ENCODE measurements at regions of chr21 and their contacts with region 1.

Region 1: DNA sequence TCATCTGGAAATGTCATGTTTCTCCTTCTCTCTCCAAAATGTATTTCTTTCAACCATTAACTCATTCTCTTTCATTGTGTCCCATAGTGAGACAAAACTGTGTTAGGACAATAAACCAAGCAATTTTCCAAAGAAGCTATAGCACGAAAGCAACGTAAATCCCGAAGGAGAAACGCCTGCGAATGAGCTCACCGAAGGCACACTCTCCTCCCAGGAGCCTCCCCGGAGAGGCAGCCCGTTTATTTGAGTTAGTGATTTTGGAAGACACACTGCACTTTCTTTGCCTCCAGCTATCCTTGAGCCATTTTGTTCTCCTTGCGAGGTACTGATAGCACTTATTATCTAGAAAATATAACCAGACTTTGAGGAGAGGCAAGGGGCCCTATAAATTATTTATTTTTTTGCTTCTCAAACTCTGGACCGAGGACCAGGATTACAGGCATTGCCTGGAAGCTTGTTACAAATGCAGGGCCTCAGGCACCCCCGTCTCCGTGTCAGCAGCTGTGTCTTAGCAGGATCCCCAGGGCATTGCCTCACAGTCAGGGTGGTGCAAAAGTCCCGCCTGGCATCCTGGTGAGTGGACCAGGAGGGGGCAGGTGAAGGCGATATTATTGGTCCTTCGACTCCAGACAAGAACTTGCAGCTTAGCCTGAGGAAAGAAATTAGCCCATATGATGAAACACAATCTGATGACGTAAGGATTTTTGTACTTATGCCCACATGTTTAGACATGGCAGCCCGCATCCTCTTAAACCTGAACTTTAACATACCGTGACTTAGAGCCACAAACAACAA is 41.0 kb downstream of the RSPH1 start:
- DNase-seq: no peak
- ATAC-seq: no peak
- H3K4me3 ChIP-seq: no peak overlapping the region
- H3K4me3 Mint-ChIP-seq: peak overlapping the region in 1 of 10 donors; percentile 17
- H3K27ac ChIP-seq: no peak overlapping the region
- H3K27ac Mint-ChIP-seq: peak overlapping the region in 2 of 9 donors; percentile 32 to 45
- H3K4me1 ChIP-seq: peaks cover 0 to 17% of the 10 kb centered on the region in 2 donors
- H3K4me1 Mint-ChIP-seq: peaks cover 19 to 61% (median 48%) of the 10 kb centered on the region in 7 donors
- H3K27me3 ChIP-seq: no peaks in the 10 kb centered on the region
- H3K27me3 Mint-ChIP-seq: no peaks in the 10 kb centered on the region

Region 2: DNA sequence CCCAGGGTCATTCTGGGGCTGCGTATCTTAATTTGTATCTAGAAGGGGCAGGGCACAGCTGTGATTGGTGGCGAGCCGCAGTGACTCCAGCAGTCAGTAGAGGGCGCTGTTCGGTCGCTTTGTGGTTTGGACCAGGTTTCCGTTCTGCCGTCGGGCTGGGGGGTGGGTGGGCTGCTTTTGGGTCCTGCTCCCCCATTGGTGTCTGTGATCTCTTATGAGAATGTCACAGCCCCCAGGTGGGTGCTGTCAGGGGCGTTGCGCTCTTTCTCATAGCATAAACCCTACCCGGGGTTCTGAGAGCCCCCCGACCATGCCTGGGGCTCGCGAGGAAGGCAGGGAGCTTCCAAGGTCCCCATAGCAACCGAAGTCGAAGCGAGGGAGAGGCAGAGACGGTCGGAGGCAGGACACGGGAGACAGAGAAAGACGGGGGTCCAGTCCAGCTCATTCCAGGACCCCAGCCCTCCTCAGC is 145.2 kb before region 1 on chr21:
- CTCF ChIA-PET with region 1: interaction called, 5 read pairs
- POLR2A ChIA-PET with region 1: no interaction called
- intact Hi-C with region 1: loop called (anchors 1 kb)
- DNase-seq: peak; percentile 48 to 80 (median 61)
- ATAC-seq: peak; percentile 86
- H3K4me3 ChIP-seq: no peak overlapping the region
- H3K4me3 Mint-ChIP-seq: peak overlapping the region in 6 of 10 donors; percentile 7 to 46 (median 38)
- H3K27ac ChIP-seq: no peak overlapping the region
- H3K27ac Mint-ChIP-seq: peak overlapping the region in 6 of 9 donors; percentile 21 to 49 (median 36)
- H3K4me1 ChIP-seq: peaks cover 0 to 8% of the 10 kb centered on the region in 2 donors
- H3K4me1 Mint-ChIP-seq: peaks cover 0 to 16% (median 7%) of the 10 kb centered on the region in 7 donors
- H3K27me3 ChIP-seq: no peaks in the 10 kb centered on the region
- H3K27me3 Mint-ChIP-seq: peaks cover 0 to 15% (median 0%) of the 10 kb centered on the region in 5 donors

Measured in naive thymus-derived CD4-positive, alpha-beta T cell (primary cell).